ENCODE measurements at regions of chr9 and their contacts with region 1.

Region 1: GRCh38 chr9:22008736-22009562 is at the start of gene CDKN2B:
- DNase-seq: peak; percentile 25 to 84 (median 59)
- ATAC-seq: peak; percentile 60
- H3K4me3 ChIP-seq: peak within 1 kb of the TSS; percentile 45 to 57
- H3K4me3 Mint-ChIP-seq: peak within 1 kb of the TSS; percentile 74
- H3K27ac ChIP-seq: no peak within 1 kb of the TSS
- H3K27ac Mint-ChIP-seq: no peak within 1 kb of the TSS
- H3K4me1 ChIP-seq: peaks cover 29% of the 10 kb centered on the region
- H3K4me1 Mint-ChIP-seq: peaks cover 20% of the 10 kb centered on the region
- H3K27me3 ChIP-seq: peaks cover 43 to 46% of the 10 kb centered on the region in 2 experiments
- H3K27me3 Mint-ChIP-seq: peaks cover 54% of the 10 kb centered on the region
- CTCF ChIP-seq: peak; percentile 69
- total RNA-seq, gene CDKN2B: not detected

Region 2: DNA sequence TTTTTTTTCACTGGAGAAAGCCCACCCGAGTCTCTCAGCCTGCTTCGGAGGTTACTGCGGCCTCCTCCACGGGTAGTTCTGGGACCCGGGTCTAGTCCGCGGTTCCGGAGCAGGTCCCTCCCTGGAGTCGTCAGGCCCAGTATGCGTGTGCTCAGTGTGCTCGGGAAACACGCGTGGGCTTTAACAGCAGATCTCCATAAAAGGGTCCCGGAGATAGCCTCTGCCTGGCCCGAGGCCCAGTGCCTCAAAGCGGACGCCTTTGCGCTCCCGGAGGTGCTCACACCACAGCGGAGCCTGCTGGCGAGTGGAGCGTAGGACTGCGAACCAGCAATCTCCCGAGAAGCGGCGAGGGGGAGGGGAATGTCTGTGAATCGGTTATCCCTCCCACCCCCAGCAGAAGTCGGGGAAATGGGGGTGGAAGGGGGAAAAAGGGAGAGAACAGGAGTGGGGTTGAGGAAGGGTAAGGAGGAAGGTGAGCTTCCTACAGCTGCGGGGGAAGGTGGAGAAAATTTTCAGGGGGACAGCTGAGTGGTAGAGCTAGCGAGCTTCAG is 43.5 kb before region 1 on chr9:
- CTCF ChIA-PET with region 1: interaction called, 11 read pairs
- POLR2A ChIA-PET with region 1: no interaction called
- intact Hi-C with region 1: loop called in 1 of 2 experiments (anchors 5 kb)
- DNase-seq: peak in 5 of 9 experiments; percentile 29 to 69 (median 36)
- ATAC-seq: peak; percentile 43
- H3K4me3 ChIP-seq: peak overlapping the region; percentile 30 to 33
- H3K4me3 Mint-ChIP-seq: peak overlapping the region; percentile 42
- H3K27ac ChIP-seq: no peak overlapping the region
- H3K27ac Mint-ChIP-seq: peak overlapping the region; percentile 37
- H3K4me1 ChIP-seq: peaks cover 9% of the 10 kb centered on the region
- H3K4me1 Mint-ChIP-seq: peaks cover 15% of the 10 kb centered on the region
- H3K27me3 ChIP-seq: peaks cover 59 to 69% of the 10 kb centered on the region in 2 experiments
- H3K27me3 Mint-ChIP-seq: peaks cover 89% of the 10 kb centered on the region
- CTCF ChIP-seq: no peak

Region 3: DNA sequence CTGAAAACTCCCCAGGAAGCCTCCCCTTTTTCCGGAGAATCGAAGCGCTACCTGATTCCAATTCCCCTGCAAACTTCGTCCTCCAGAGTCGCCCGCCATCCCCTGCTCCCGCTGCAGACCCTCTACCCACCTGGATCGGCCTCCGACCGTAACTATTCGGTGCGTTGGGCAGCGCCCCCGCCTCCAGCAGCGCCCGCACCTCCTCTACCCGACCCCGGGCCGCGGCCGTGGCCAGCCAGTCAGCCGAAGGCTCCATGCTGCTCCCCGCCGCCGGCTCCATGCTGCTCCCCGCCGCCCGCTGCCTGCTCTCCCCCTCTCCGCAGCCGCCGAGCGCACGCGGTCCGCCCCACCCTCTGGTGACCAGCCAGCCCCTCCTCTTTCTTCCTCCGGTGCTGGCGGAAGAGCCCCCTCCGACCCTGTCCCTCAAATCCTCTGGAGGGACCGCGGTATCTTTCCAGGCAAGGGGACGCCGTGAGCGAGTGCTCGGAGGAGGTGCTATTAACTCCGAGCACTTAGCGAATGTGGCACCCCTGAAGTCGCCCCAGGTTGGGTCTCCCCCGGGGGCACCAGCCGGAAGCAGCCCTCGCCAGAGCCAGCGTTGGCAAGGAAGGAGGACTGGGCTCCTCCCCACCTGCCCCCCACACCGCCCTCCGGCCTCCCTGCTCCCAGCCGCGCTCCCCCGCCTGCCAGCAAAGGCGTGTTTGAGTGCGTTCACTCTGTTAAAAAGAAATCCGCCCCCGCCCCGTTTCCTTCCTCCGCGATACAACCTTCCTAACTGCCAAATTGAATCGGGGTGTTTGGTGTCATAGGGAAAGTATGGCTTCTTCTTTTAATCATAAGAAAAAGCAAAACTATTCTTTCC is 34.2 kb before region 1 on chr9:
- CTCF ChIA-PET with region 1: interaction called, 11 read pairs
- POLR2A ChIA-PET with region 1: no interaction called
- intact Hi-C with region 1: loop called in 1 of 2 experiments (anchors 5 kb)
- DNase-seq: peak in 6 of 9 experiments; percentile 20 to 58 (median 30)
- ATAC-seq: peak; percentile 70
- H3K4me3 ChIP-seq: peak overlapping the region; percentile 25 to 42
- H3K4me3 Mint-ChIP-seq: peak overlapping the region; percentile 74
- H3K27ac ChIP-seq: no peak overlapping the region
- H3K27ac Mint-ChIP-seq: no peak overlapping the region
- H3K4me1 ChIP-seq: peaks cover 15% of the 10 kb centered on the region
- H3K4me1 Mint-ChIP-seq: peaks cover 18% of the 10 kb centered on the region
- H3K27me3 ChIP-seq: peaks cover 69 to 87% of the 10 kb centered on the region in 2 experiments
- H3K27me3 Mint-ChIP-seq: peaks cover 86% of the 10 kb centered on the region
- CTCF ChIP-seq: no peak

Region 4: DNA sequence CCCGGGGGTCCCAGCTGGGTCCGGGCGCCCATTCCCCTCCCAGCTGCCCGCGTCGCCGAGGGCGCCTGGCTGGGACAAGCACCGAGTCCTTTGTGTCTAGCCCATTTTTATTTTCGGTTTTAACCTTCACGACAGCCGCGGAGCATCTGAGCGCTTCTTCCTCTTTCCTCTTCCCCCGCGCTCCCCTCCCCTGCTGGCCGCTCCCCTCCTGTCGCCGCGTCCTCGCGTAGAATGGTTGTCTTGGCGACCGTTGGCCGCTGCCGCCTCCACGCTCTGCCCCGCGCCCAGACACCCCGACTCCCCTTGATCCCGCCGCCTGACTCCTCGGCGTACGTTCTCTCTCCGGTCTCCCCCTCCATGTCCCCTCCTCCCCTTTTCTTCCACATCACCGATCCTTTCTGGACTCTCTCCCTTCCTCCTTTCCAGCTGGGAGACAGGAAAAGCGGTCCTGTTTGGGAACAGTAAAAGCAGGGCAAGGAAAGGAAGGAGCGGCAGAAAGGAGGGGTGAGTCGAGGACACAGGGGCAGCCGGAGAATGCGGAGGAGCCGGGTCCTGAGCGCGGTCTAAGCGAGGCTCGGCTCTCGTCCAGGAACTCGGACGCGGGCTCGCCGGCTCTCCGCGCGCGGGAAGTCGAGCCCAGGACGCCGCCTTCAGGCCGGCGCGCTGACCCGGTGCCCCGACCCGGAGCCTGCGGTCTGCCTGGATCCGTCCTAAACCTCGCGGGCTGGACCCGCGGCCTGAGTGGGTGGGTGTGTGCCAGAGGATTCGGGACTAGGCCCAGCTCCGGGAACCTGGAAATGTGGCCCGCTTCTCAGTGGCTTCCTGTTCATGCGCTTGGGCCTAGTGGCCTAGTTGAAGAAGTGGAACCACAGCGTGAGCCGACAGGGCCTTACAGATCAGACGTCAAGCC is 13.5 kb before region 1 on chr9:
- CTCF ChIA-PET with region 1: interaction called, 43 read pairs
- POLR2A ChIA-PET with region 1: no interaction called
- intact Hi-C with region 1: no loop called
- DNase-seq: peak; percentile 48 to 91 (median 76)
- ATAC-seq: peak; percentile 70
- H3K4me3 ChIP-seq: peak overlapping the region; percentile 81 to 96
- H3K4me3 Mint-ChIP-seq: peak overlapping the region; percentile 96
- H3K27ac ChIP-seq: peak overlapping the region; percentile 75 to 81
- H3K27ac Mint-ChIP-seq: peak overlapping the region; percentile 91
- H3K4me1 ChIP-seq: peaks cover 10% of the 10 kb centered on the region
- H3K4me1 Mint-ChIP-seq: peaks cover 14% of the 10 kb centered on the region
- H3K27me3 ChIP-seq: peaks cover 1 to 12% of the 10 kb centered on the region in 2 experiments
- H3K27me3 Mint-ChIP-seq: peaks cover 20% of the 10 kb centered on the region
- CTCF ChIP-seq: no peak

Region 5: DNA sequence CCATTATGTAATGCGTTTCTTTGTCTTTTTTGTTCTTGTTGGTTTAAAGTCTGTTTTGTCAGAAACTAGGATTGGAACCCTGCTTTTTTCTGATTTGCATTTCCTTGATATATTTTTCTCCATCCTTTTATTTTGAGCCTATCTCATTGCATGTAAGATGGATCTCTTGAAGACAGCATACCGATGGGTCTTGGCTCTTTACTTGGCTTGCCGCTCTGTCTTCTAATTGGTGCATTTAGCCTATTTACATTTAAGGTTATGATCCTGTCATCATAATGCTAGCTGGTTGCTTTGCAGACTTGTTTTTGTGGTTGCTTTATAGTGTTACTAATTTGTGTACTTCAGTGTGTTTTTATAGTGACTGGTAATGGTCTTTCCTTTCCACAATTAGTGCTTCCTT is 13.4 kb after region 1 on chr9:
- CTCF ChIA-PET with region 1: interaction called, 20 read pairs
- POLR2A ChIA-PET with region 1: no interaction called
- intact Hi-C with region 1: no loop called
- DNase-seq: no peak
- ATAC-seq: no peak
- H3K4me3 ChIP-seq: no peak overlapping the region
- H3K4me3 Mint-ChIP-seq: no peak overlapping the region
- H3K27ac ChIP-seq: no peak overlapping the region
- H3K27ac Mint-ChIP-seq: no peak overlapping the region
- H3K4me1 ChIP-seq: no peaks in the 10 kb centered on the region
- H3K4me1 Mint-ChIP-seq: no peaks in the 10 kb centered on the region
- H3K27me3 ChIP-seq: no peaks in the 10 kb centered on the region
- H3K27me3 Mint-ChIP-seq: peaks cover 33% of the 10 kb centered on the region
- CTCF ChIP-seq: no peak

Region 6: DNA sequence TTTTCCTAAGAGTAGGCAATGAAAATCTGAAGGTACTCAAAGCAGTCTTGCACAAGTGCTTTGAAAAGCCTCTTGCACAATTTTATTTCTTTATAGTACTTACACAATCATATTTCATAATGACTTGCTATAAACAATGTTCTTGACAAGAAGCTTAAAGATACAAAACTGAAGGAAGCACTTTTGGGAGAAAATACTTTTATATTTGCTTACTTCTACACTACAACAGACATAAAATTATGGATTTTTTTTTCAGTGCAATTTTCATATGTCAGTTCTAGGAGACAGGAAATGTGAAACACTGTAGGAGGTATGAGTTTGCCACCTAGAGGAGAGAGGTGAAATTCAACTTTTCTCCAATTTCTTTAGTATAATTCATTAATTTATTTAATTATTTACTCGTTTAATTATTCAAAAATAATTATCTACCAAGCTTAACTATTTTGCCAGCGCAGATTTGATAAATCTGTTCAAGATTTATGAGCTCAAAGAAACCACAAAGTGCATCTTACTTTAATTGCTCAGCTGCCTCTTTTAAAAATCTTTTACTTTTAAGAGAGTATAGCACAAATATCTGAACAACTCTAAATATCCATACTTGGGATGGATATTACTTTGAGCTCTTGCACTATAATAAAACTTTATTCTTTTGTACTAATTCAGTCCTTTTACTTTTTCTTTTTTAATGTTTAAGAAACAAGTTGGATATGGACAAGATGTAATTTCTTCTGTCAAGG is 29.2 kb after region 1 on chr9:
- CTCF ChIA-PET with region 1: interaction called, 17 read pairs
- POLR2A ChIA-PET with region 1: no interaction called
- intact Hi-C with region 1: loop called in 1 of 2 experiments (anchors 2 kb)
- DNase-seq: peak in 2 of 9 experiments; percentile 35 to 56
- ATAC-seq: peak; percentile 51
- H3K4me3 ChIP-seq: no peak overlapping the region
- H3K4me3 Mint-ChIP-seq: no peak overlapping the region
- H3K27ac ChIP-seq: no peak overlapping the region
- H3K27ac Mint-ChIP-seq: no peak overlapping the region
- H3K4me1 ChIP-seq: no peaks in the 10 kb centered on the region
- H3K4me1 Mint-ChIP-seq: no peaks in the 10 kb centered on the region
- H3K27me3 ChIP-seq: no peaks in the 10 kb centered on the region
- H3K27me3 Mint-ChIP-seq: no peaks in the 10 kb centered on the region
- CTCF ChIP-seq: peak; percentile 58

Measured in CD8-positive, alpha-beta T cell (primary cell).